PC-9 (cell line): ENCODE measurements at regions of chr10 and their contacts with region 1.

Region 1: DNA sequence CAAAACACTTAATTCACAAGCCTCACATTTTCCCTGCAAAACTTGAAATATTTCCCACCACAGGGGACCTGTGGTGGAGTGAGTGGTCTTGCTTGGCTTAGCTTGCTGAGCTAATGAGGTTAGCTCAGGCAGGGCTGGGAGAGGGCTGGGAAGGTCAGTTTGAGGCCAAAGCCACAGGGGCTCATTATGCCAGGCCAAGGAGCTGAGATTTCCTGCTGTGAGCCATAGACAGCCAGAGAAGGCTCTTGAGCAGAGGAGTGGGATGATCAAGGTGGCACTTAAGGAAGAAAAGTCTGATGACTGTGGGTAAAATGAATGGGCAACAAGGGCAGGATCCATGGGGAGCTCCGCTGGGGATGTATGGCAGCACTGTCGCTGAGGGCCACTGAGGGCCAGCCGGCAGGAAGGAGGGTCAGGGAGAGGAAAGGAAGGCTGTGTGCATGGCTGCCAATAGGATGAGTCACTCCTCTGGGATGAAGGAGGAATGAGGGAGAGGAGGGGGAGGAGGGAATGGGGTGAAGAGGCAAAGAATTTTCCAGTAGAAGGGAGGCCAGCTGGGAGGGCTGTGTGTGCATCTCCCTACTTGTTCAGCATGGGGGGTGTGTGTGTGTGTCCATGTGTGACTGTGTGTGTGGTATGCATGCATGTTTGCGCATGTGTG is 18.7 kb upstream of the ZNF488 start:
- DNase-seq: peak; percentile 85 to 88
- H3K4me3 ChIP-seq: no peak overlapping the region; the same call in 1 of the 2 replicates
- H3K27ac ChIP-seq: peak overlapping the region; percentile 76
- H3K4me1 ChIP-seq: peaks cover 60% of the 10 kb centered on the region
- H3K27me3 ChIP-seq: no peaks in the 10 kb centered on the region
- CTCF ChIP-seq: no peak

Region 2: DNA sequence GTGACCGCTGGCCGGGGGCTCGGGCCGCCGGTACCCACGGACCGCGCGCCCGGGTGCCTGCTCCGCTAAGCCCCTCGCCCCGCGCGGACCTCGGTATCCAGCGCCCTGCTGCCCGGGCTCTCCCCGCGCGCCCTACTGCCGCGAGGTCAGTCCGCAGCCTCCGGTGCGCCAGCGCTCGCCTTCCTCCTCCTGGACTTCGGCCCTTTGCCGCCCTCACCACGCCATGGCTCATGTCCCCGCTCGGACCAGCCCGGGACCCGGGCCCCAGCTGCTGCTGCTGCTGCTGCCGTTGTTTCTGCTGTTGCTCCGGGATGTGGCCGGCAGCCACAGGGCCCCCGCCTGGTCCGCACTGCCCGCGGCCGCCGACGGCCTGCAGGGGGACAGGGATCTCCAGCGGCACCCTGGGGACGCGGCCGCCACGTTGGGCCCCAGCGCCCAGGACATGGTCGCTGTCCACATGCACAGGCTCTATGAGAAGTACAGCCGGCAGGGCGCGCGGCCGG is 102.3 kb before region 1 on chr10:
- CTCF ChIA-PET with region 1: no interaction called
- POLR2A ChIA-PET with region 1: no interaction called
- intact Hi-C with region 1: no loop called
- DNase-seq: no peak
- H3K4me3 ChIP-seq: no peak overlapping the region
- H3K27ac ChIP-seq: no peak overlapping the region
- H3K4me1 ChIP-seq: peaks cover 8% of the 10 kb centered on the region; the same call in 1 of the 2 replicates
- H3K27me3 ChIP-seq: no peaks in the 10 kb centered on the region
- CTCF ChIP-seq: no peak

Region 3: GRCh38 chr10:47384148-47384921 is 18.4 kb before region 1 on chr10 and contains the start of gene ZNF488:
- CTCF ChIA-PET with region 1: interaction called, 3 read pairs
- POLR2A ChIA-PET with region 1: interaction called, 11 read pairs
- intact Hi-C with region 1: loop called (anchors 1 kb)
- DNase-seq: peak; percentile 83 to 97
- H3K4me3 ChIP-seq: peak within 1 kb of the TSS; percentile 81
- H3K27ac ChIP-seq: peak within 1 kb of the TSS; percentile 54
- H3K4me1 ChIP-seq: peaks cover 21% of the 10 kb centered on the region
- H3K27me3 ChIP-seq: no peaks in the 10 kb centered on the region
- CTCF ChIP-seq: no peak; the same call in 1 of the 2 replicates
- total RNA-seq, gene ZNF488: 11.4 and 18.1 TPM in 2 replicates